ENCODE measurements at regions of chr5 and their contacts with region 1.

Region 1: GRCh38 chr5:68264024-68264956 is 48.7 kb downstream of the PIK3R1 start:
- DNase-seq: no peak
- ATAC-seq: peak; percentile 33
- H3K4me3 ChIP-seq: no peak overlapping the region
- H3K27ac ChIP-seq: peak overlapping the region; percentile 64 to 80
- H3K4me1 ChIP-seq: peaks cover 8 to 17% of the 10 kb centered on the region in 2 donors
- H3K27me3 ChIP-seq: no peaks in the 10 kb centered on the region

Region 2: GRCh38 chr5:68215208-68215897 is 48.9 kb before region 1 on chr5 and contains the start of gene PIK3R1:
- intact Hi-C with region 1: loop called in 1 of 2 experiments (anchors 5 kb)
- DNase-seq: peak; percentile 97 to 98
- ATAC-seq: peak; percentile 96
- H3K4me3 ChIP-seq: peak within 1 kb of the TSS; percentile 93 to 97
- H3K27ac ChIP-seq: peak within 1 kb of the TSS; percentile 86 to 95
- H3K4me1 ChIP-seq: peaks cover 1% of the 10 kb centered on the region in 2 donors
- H3K27me3 ChIP-seq: no peaks in the 10 kb centered on the region
- total RNA-seq, gene PIK3R1: 63.4 to 132 TPM

Measured in aorta (tissue), 5 donors.